ENCODE measurements at regions of chr2 and their contacts with region 1.

Region 1: DNA sequence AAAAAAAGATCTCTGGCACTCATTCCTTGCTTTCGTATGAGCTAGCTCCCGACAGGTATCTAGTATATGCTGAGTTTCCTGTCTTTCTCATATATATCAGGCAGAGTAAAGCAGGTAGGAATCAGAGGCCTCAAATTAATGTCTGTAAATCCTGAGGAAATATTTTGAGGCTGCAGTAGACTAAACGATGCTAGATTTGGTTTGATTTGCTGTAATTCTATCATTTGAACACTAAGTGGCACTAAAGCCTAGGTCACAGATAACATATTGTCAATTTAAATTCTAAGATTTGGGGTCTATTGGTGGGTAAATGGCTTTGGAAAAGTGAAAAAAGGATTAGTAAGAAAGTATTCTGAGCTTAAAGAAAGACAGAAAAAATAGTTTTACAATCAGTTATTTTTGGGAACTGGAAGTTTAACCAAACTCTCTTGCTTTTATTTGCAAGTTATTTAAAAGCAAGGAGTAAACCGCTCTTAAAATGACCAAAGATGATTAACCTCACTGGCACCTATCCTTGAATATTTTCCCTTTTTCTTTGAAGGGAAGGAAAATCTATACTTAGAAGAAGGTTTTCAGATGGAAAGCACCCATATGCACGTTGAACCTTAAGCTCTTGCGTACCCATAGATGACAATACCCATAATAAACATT is 37.6 kb upstream of the SLC4A10 start:
- DNase-seq: no peak
- H3K4me3 ChIP-seq: no peak overlapping the region
- H3K27ac ChIP-seq: no peak overlapping the region
- H3K4me1 ChIP-seq: no peaks in the 10 kb centered on the region
- H3K27me3 ChIP-seq: no peaks in the 10 kb centered on the region
- CTCF ChIP-seq: peak; percentile 78

Region 2: DNA sequence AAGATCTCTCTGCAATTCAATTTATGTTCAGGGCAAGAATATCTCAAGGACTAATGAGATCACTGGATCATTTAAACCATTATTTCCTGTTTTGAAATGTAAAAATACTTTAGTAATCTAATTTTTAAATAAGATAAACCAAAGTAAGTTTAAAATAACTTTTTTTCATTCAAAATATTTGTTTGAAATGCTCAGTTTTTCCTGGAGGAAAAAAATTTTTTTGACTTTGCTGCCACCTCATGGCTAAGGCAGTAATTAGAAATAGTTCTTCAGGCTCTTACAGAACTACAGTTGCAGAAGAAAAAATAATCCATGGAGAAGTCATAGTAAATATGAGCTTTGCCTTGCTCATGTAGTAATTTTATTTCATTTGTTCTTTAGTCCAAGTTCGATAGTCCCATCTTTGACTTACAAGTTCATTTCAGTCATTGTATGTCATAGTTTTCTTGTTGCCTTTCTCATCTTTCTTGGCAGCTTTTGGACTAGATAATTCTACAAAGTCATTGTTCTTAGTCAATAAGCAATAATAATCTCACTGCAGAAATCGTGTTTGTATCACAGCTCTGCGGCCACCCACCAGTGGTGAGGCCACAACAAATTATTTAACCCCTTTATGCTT is 360.0 kb after region 1 on chr2:
- CTCF ChIA-PET with region 1: interaction called, 9 read pairs
- POLR2A ChIA-PET with region 1: no interaction called
- intact Hi-C with region 1: loop called (anchors 1 kb)
- DNase-seq: no peak
- H3K4me3 ChIP-seq: no peak overlapping the region
- H3K27ac ChIP-seq: no peak overlapping the region
- H3K4me1 ChIP-seq: no peaks in the 10 kb centered on the region
- H3K27me3 ChIP-seq: no peaks in the 10 kb centered on the region
- CTCF ChIP-seq: peak; percentile 70

Region 3: DNA sequence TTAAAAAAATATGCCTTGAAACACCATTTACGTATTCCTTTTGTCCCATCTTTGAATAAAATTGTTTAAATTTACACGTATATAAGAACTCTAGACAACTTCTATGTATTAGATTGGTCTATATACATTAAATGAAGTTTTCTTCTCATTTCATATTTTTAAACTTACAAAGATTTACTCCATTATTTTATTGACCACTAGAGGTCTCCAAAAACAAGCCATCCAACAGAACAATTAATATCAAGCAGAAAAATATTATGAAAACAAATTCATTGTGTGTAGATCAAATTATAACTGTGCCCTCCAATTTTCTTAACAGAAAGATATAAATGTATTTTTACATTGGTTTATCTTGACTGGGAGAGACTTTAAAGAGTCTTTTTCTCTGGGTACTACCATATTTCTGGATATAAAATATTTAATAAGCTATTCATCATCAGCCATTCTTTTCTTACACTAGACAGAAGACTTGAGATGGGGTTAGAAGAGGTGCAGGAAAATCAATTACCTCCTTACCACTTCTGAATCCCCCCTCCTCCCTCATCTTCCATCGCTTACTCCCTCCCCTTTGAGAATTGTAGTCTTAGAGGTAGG is 420.9 kb after region 1 on chr2:
- CTCF ChIA-PET with region 1: no interaction called
- POLR2A ChIA-PET with region 1: no interaction called
- intact Hi-C with region 1: no loop called
- DNase-seq: no peak
- H3K4me3 ChIP-seq: no peak overlapping the region
- H3K27ac ChIP-seq: no peak overlapping the region
- H3K4me1 ChIP-seq: no peaks in the 10 kb centered on the region
- H3K27me3 ChIP-seq: no peaks in the 10 kb centered on the region
- CTCF ChIP-seq: peak; percentile 68